Endothelial cell of umbilical vein (primary cell): ENCODE measurements at regions of chr19 and their contacts with region 1.

Region 1: GRCh38 chr19:14073261-14073924 is 807 bp downstream of the MISP3 start:
- DNase-seq: peak; percentile 59
- H3K4me3 ChIP-seq: peak overlapping the region; percentile 29 to 61 (median 43)
- H3K27ac ChIP-seq: no peak overlapping the region
- H3K4me1 ChIP-seq: peaks cover 26% of the 10 kb centered on the region
- H3K27me3 ChIP-seq: no peaks in the 10 kb centered on the region
- CTCF ChIP-seq: peak; percentile 35 to 60
- POLR2A ChIP-seq: no peak

Region 2: DNA sequence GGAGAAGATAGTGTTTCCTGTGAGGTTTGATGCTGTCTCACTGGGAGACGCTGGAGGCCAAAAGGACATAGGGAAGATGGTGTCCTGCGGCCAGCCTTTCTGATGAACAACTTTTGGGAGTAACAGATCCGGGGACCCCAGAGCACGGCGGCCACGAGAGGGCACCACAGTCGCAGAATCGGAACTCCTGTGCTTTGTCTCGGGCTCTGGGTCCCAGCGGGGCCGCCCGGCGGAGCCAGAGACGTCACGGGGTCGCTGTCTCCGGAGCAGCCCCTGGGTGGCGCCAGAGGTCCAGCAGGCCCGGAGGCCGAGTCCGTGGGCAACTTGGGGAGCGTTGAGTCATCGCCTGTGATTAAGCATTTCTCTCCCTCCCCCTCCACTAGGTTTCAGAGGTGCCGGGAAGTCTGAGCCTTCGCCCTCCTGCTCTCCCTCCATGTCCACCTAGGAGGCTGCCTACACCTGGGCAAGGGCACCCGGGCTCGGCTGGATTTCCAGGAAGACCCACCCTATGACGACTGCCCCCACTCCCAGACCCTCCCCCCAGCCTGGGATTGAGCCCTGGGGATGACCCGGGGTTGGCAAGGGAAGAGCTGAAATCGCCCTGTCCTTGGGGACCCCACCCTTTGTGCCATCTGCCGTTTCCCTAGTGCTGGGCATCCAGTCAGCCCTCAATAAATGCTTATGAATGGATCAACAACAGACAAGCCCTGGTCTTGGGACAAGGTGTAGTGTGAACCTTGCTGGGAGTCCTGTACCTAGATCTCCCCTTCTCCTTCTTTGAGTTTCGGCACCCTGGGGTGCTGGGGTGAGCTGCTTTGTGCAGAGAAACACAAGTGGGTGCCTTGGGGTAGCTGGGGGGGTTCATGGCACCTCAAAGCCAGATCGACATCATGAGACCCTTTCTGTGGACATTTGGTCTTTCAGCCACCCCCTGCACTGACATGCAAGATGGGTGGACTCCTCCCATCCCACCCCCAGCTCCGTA is 193.0 kb before region 1 on chr19:
- CTCF ChIA-PET with region 1: interaction called, 74 read pairs
- POLR2A ChIA-PET with region 1: no interaction called
- dilution Hi-C with region 1: no loop called
- intact Hi-C with region 1: loop called (anchors 1 kb)
- DNase-seq: peak; percentile 96
- H3K4me3 ChIP-seq: peak overlapping the region in 1 of 3 experiments; percentile 4
- H3K27ac ChIP-seq: peak overlapping the region; percentile 78
- H3K4me1 ChIP-seq: peaks cover 5% of the 10 kb centered on the region
- H3K27me3 ChIP-seq: no peaks in the 10 kb centered on the region
- CTCF ChIP-seq: peak; percentile 100
- POLR2A ChIP-seq: no peak

Region 3: GRCh38 chr19:13959962-13960862 is 113.2 kb before region 1 on chr19:
- CTCF ChIA-PET with region 1: interaction called, 11 read pairs
- POLR2A ChIA-PET with region 1: no interaction called
- dilution Hi-C with region 1: no loop called
- intact Hi-C with region 1: no loop called
- DNase-seq: no peak
- H3K4me3 ChIP-seq: no peak overlapping the region
- H3K27ac ChIP-seq: no peak overlapping the region
- H3K4me1 ChIP-seq: no peaks in the 10 kb centered on the region
- H3K27me3 ChIP-seq: no peaks in the 10 kb centered on the region
- CTCF ChIP-seq: peak; percentile 19 to 44
- POLR2A ChIP-seq: no peak

Region 4: DNA sequence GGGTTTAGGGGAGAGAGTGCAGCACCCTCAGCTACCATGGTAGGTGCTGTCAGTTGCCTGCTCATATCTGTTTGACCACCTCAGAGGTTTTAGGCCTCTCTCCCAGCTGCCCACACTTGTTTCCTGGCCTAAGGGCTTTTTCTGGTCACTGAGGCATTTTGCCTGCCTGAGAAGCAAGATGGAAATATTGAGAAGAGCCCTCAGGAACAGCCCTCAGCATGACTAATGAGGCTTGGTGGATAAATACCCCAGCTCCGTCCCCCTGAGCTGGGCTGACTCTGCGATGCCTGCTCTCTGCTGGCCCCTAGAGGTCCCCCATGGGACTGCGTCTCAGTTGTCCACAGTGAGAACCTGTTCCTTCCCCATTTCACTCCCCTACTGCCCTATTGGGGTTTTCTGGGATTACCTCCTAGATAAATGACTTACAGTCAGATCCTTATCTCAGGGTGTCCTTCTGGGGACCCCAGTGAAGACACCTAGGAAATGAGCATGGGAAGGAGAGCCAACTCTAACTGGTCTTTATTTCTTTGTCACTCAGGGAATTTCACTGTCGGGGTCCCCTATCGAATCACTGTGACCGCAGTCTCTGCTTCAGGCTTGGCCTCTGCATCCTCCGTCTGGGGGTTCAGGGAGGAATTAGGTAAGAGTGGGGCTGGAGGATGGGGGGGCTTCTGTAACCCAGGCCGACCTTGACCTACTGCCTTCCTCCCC is 24.8 kb before region 1 on chr19:
- CTCF ChIA-PET with region 1: interaction called, 14 read pairs
- POLR2A ChIA-PET with region 1: no interaction called
- dilution Hi-C with region 1: no loop called
- intact Hi-C with region 1: no loop called
- DNase-seq: peak; percentile 35
- H3K4me3 ChIP-seq: no peak overlapping the region
- H3K27ac ChIP-seq: no peak overlapping the region
- H3K4me1 ChIP-seq: no peaks in the 10 kb centered on the region
- H3K27me3 ChIP-seq: no peaks in the 10 kb centered on the region
- CTCF ChIP-seq: peak; percentile 83 to 91
- POLR2A ChIP-seq: no peak

Region 5: DNA sequence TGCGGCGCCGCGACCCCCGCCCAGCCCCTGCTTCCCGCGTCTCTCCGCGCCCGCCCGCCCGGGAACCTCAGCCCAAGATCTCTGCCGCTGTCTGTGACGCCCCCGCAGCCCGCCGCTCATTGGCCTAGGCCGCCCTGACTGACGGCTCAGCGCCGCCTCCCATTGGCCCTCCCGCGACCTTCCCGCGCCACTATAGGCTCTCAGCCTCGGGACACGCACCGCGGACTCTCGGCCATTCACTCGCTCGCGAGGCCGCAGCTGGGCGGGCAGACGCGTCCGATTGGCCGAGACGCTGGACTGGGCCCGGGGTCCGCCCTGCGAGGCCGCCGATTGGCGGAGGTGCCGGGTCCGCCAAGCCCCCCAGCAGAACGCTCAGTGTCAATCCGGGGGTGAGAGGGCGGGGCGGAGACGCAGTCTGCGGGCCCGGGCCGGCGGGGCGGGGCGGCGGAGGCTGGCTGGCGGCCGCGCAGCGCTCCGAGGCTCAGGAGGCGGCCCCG is 44.3 kb after region 1 on chr19 and contains the start of gene PRKACA:
- CTCF ChIA-PET with region 1: interaction called, 6 read pairs
- POLR2A ChIA-PET with region 1: no interaction called
- dilution Hi-C with region 1: no loop called
- intact Hi-C with region 1: loop called (anchors 1 kb)
- DNase-seq: peak; percentile 99
- H3K4me3 ChIP-seq: peak within 1 kb of the TSS; percentile 67 to 84 (median 80)
- H3K27ac ChIP-seq: peak within 1 kb of the TSS; percentile 94
- H3K4me1 ChIP-seq: peaks cover 25% of the 10 kb centered on the region
- H3K27me3 ChIP-seq: no peaks in the 10 kb centered on the region
- CTCF ChIP-seq: no peak
- POLR2A ChIP-seq: no peak
- total RNA-seq, gene PRKACA: 97.5 and 110 TPM in 2 replicates

Region 6: GRCh38 chr19:14160017-14160703 is 86.8 kb after region 1 on chr19:
- CTCF ChIA-PET with region 1: no interaction called
- POLR2A ChIA-PET with region 1: no interaction called
- dilution Hi-C with region 1: no loop called
- intact Hi-C with region 1: no loop called
- DNase-seq: no peak
- H3K4me3 ChIP-seq: no peak overlapping the region
- H3K27ac ChIP-seq: no peak overlapping the region
- H3K4me1 ChIP-seq: no peaks in the 10 kb centered on the region
- H3K27me3 ChIP-seq: no peaks in the 10 kb centered on the region
- CTCF ChIP-seq: no peak
- POLR2A ChIP-seq: no peak

Region 7: GRCh38 chr19:14175351-14175792 is 102.0 kb after region 1 on chr19:
- CTCF ChIA-PET with region 1: no interaction called
- POLR2A ChIA-PET with region 1: no interaction called
- dilution Hi-C with region 1: no loop called
- intact Hi-C with region 1: no loop called
- DNase-seq: no peak
- H3K4me3 ChIP-seq: no peak overlapping the region
- H3K27ac ChIP-seq: no peak overlapping the region
- H3K4me1 ChIP-seq: no peaks in the 10 kb centered on the region
- H3K27me3 ChIP-seq: no peaks in the 10 kb centered on the region
- CTCF ChIP-seq: no peak
- POLR2A ChIP-seq: no peak